ENCODE measurements at regions of chr20 and their contacts with region 1.

Region 1: DNA sequence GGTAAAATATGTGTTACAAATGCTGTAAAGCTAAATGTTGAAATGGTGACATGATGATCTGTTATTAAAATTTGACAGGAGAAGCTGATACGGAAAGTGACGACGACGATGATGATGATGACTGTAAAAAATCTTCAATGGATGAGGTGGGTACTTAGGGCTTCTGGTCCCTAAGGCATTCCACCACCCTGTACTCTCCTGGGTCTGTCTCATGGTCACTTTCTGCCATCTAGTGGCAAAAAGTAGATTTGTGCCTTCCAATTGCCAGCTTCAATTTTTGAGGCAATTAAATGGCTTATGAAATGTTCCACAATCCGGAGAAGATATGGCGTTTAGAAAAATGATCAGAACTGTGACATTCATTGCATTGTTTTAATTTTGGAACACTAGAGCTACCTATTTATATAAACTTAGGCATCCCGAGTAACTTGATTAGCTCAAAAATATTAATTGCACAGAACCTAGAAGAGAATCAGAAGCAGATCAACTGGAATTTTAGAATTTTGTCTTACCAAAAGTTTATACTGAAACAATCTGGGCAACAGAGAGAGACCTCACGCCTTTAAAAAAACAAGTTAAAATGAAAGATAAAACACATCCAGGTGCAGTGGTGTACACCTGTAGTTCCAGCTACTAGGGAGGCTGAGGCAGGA is 346.5 kb upstream of the PLCB4 start:
- DNase-seq: peak in 1 of 2 donors; percentile 43
- ATAC-seq: peak in 7 of 8 donors; percentile 74 to 93 (median 84)
- H3K4me3 ChIP-seq: no peak overlapping the region
- H3K27ac ChIP-seq: no peak overlapping the region
- H3K4me1 ChIP-seq: peaks cover 0 to 12% (median 0%) of the 10 kb centered on the region in 9 donors
- H3K27me3 ChIP-seq: no peaks in the 10 kb centered on the region
- CTCF ChIP-seq: peak; percentile 58 to 87 (median 76)

Region 2: GRCh38 chr20:7935027-7935551 is 787.3 kb before region 1 on chr20:
- intact Hi-C with region 1: loop called (anchors 1 to 10 kb)
- DNase-seq: no peak
- ATAC-seq: no peak
- H3K4me3 ChIP-seq: no peak overlapping the region
- H3K27ac ChIP-seq: no peak overlapping the region
- H3K4me1 ChIP-seq: no peaks in the 10 kb centered on the region
- H3K27me3 ChIP-seq: no peaks in the 10 kb centered on the region
- CTCF ChIP-seq: no peak

Region 3: DNA sequence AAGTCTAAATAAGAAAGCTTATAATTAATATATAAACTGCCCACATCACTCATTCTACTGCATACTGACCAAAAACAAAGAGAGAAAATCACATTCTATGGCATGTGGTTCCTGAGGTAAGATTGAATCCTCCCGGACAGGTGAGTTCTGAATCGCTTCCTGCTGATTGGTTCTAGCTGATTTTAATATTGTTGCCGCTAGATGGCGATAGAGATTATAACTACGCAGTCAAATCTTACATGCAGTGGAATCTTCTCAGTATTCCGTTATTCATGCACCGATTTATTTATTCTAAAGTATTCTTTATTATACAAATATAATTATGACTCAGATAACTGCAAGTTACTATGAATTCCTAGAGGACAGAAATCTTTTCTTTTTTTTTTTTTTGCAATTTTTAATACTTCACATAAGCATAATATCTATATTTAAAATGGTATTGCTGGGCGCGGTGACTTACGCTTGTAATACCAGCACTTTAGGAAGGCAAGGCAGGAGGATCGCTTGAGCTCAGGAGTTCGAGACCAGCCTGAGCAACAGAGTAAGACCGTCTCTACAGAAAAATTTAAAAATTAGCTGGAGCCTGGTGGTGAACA is 678.6 kb before region 1 on chr20:
- intact Hi-C with region 1: loop called (anchors 1 to 5 kb)
- DNase-seq: peak in 1 of 2 donors; percentile 39
- ATAC-seq: peak in 6 of 8 donors; percentile 42 to 75 (median 64)
- H3K4me3 ChIP-seq: no peak overlapping the region
- H3K27ac ChIP-seq: no peak overlapping the region
- H3K4me1 ChIP-seq: peaks cover 0 to 6% (median 0%) of the 10 kb centered on the region in 9 donors
- H3K27me3 ChIP-seq: no peaks in the 10 kb centered on the region
- CTCF ChIP-seq: peak; percentile 63 to 85 (median 77)

Region 4: DNA sequence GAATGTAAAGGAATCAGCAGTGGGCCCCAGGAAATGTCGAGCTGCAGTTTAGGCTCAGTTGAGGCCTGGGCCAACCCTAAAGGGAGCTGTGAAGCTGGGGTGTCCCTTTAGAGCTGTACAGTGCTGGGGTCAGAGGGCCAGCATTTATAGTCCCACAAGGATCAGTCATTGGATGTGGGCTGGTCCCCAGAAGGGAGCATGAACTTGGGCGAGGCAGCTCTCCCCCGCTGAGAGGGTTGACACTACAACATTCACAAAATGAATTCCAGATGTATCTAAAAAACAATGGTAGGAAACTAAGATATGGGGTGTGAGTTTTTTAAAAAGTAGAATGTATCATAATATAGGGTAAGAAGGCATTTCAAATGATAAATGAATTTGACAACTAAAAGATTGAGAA is 673.1 kb before region 1 on chr20:
- intact Hi-C with region 1: loop called in 4 of 10 experiments (anchors 2 to 5 kb)
- DNase-seq: no peak
- ATAC-seq: no peak
- H3K4me3 ChIP-seq: no peak overlapping the region
- H3K27ac ChIP-seq: no peak overlapping the region
- H3K4me1 ChIP-seq: peaks cover 0 to 3% (median 0%) of the 10 kb centered on the region in 9 donors
- H3K27me3 ChIP-seq: no peaks in the 10 kb centered on the region
- CTCF ChIP-seq: no peak

Region 5: GRCh38 chr20:8389381-8390036 is 332.9 kb before region 1 on chr20:
- intact Hi-C with region 1: loop called in 7 of 10 experiments (anchors 2 to 10 kb)
- DNase-seq: no peak
- ATAC-seq: peak in 7 of 8 donors; percentile 12 to 59 (median 48)
- H3K4me3 ChIP-seq: no peak overlapping the region
- H3K27ac ChIP-seq: peak overlapping the region in 7 of 10 donors; percentile 6 to 61 (median 45)
- H3K4me1 ChIP-seq: peaks cover 0 to 63% (median 24%) of the 10 kb centered on the region in 9 donors
- H3K27me3 ChIP-seq: no peaks in the 10 kb centered on the region
- CTCF ChIP-seq: peak; percentile 47 to 72 (median 59)

Region 6: DNA sequence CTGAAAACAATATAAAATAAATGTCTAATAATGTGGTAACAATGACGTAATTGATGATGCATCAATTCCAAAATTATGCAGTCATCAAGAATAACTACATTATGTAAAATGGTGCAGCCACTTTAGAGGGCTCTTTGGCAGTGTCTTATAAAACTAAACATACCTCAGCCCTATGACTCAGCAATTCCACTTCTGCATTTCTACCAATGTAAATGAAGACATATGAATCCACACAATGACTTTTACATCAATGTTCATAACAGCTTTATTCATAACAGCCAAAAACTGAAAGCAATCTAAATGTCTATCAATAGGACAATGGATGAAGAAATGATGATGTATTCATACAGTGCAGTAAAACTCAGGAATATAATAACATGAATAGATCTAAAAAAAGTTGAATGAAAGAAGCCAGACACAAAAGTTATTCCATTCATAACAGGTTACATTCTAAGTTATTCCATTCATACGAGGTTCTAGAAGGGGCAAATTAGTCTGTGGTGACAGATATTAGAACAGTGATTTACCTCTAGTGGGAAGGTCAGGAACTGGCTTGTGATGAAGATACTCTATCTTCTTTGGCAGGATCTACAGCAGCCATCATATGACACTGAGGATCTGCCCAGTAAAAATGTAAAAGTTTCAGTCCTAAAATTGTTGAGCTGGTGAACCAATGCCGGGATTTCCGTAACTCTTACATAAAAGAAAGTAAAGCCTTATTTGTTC is 194.2 kb before region 1 on chr20:
- intact Hi-C with region 1: loop called in 1 of 10 experiments (anchors 10 kb)
- DNase-seq: no peak
- ATAC-seq: no peak
- H3K4me3 ChIP-seq: no peak overlapping the region
- H3K27ac ChIP-seq: no peak overlapping the region
- H3K4me1 ChIP-seq: peaks cover 0 to 30% (median 0%) of the 10 kb centered on the region in 9 donors
- H3K27me3 ChIP-seq: no peaks in the 10 kb centered on the region
- CTCF ChIP-seq: no peak

Region 7: DNA sequence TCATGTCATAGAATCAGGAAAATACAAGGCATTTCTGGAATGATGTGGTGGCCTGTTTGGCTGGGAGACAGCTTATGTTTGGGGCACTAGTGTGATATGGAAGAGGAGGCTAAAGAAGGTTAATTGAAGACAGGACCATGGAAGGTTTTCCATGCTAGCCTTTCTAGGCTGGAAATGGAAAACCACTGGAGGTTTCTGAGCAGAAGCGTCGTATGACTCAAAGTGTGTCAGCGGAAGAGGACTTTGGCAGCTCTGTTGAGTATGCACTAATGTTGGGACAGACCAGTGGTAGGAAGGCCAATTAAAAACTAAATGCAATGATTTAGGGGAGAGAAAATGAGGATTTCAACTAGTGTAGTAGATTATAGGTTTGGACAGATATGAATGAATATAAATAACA is 177.2 kb before region 1 on chr20:
- intact Hi-C with region 1: loop called in 1 of 10 experiments (anchors 10 kb)
- DNase-seq: no peak
- ATAC-seq: peak in 1 of 8 donors; percentile 53
- H3K4me3 ChIP-seq: no peak overlapping the region
- H3K27ac ChIP-seq: no peak overlapping the region
- H3K4me1 ChIP-seq: peaks cover 3 to 59% (median 36%) of the 10 kb centered on the region in 9 donors
- H3K27me3 ChIP-seq: no peaks in the 10 kb centered on the region
- CTCF ChIP-seq: no peak

Region 8: GRCh38 chr20:8664778-8665177 is 57.6 kb before region 1 on chr20:
- intact Hi-C with region 1: no loop called
- DNase-seq: peak in 1 of 2 donors; percentile 8
- ATAC-seq: peak in 6 of 8 donors; percentile 38 to 83 (median 79)
- H3K4me3 ChIP-seq: no peak overlapping the region
- H3K27ac ChIP-seq: peak overlapping the region in 2 of 10 donors; percentile 15 to 18
- H3K4me1 ChIP-seq: peaks cover 0 to 40% (median 15%) of the 10 kb centered on the region in 9 donors
- H3K27me3 ChIP-seq: no peaks in the 10 kb centered on the region
- CTCF ChIP-seq: peak in 8 of 9 donors; percentile 9 to 59 (median 32)

Region 9: GRCh38 chr20:8790442-8791074 is 68.2 kb after region 1 on chr20:
- intact Hi-C with region 1: no loop called
- DNase-seq: peak in 1 of 2 donors; percentile 19
- ATAC-seq: no peak
- H3K4me3 ChIP-seq: no peak overlapping the region
- H3K27ac ChIP-seq: no peak overlapping the region
- H3K4me1 ChIP-seq: peaks cover 0 to 10% (median 3%) of the 10 kb centered on the region in 9 donors
- H3K27me3 ChIP-seq: no peaks in the 10 kb centered on the region
- CTCF ChIP-seq: peak; percentile 91 to 98 (median 94)

Region 10: GRCh38 chr20:8875586-8875985 is 153.2 kb after region 1 on chr20:
- intact Hi-C with region 1: no loop called
- DNase-seq: no peak
- ATAC-seq: no peak
- H3K4me3 ChIP-seq: no peak overlapping the region
- H3K27ac ChIP-seq: no peak overlapping the region
- H3K4me1 ChIP-seq: no peaks in the 10 kb centered on the region
- H3K27me3 ChIP-seq: no peaks in the 10 kb centered on the region
- CTCF ChIP-seq: no peak

Region 11: DNA sequence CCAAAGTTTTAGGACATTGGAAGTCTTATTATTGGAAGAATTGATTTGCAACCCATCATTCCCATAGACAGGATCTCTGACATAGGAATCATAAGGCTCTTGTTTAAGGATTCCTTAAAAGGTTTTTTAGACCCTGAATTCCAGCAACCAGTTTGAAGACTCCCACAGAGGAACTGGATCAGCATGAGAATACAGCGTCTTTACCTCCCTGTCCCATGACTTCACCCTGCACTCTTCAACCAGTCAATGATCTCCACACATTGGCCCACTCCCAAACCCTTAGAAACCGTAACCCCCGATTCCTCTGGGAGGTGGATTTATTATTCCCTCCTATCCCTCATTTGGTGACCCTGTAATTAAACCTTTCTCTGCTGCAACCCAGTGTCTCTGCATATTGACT is 195.7 kb after region 1 on chr20:
- intact Hi-C with region 1: no loop called
- DNase-seq: no peak
- ATAC-seq: no peak
- H3K4me3 ChIP-seq: no peak overlapping the region
- H3K27ac ChIP-seq: no peak overlapping the region
- H3K4me1 ChIP-seq: no peaks in the 10 kb centered on the region
- H3K27me3 ChIP-seq: no peaks in the 10 kb centered on the region
- CTCF ChIP-seq: no peak